Activated CD4-positive, alpha-beta T cell treated with anti-CD3 and anti-CD28 coated beads for 36 hours (primary cell): ENCODE measurements at regions of chr1 and their contacts with region 1.

Region 1: DNA sequence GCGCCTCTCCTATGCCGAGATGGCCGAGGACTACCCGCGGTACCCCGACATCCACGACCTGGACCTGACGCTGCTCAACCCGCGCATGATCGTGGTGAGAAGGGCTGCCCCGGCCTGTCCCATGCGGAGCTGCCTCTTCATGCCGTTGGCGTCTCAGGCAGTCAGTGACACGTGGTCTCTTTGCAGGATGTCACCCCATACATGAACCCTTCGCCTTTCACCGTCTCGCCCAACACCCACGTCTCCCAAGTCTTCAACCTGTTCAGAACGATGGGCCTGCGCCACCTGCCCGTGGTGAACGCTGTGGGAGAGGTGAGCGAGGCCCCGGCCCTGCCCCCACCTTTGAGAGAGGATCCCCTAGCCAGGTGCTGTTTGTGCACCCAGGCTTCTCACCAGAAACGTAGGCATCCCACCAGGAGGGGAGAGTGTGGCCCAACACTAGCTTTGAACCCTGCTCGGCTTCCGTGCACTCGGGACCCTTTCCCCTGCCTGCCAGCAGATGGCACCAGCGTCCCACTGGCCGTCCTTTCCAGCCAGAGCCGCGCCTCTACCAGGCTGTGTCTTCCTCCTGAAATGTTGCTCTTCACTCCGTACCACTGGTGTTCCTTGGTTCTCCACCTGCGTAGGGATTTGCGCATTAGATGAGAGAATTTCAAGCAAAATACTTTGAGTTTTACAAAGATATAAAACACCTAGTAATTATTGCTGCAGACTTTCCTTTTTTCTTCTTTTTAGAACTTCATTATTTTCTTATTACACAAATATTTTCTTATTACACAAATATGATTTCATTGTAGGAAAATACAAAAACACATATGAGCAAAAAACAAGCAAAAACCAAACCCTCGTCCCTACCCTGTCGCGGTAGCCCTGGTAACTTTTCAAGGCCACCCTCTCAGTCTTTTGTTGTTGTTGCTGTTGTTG is 9.0 kb downstream of the NPPA start:
- DNase-seq: peak; percentile 86
- ATAC-seq: peak; percentile 98
- H3K4me3 Mint-ChIP-seq: no peak overlapping the region
- H3K27ac Mint-ChIP-seq: no peak overlapping the region
- H3K4me1 Mint-ChIP-seq: no peaks in the 10 kb centered on the region
- H3K27me3 Mint-ChIP-seq: no peaks in the 10 kb centered on the region

Region 2: DNA sequence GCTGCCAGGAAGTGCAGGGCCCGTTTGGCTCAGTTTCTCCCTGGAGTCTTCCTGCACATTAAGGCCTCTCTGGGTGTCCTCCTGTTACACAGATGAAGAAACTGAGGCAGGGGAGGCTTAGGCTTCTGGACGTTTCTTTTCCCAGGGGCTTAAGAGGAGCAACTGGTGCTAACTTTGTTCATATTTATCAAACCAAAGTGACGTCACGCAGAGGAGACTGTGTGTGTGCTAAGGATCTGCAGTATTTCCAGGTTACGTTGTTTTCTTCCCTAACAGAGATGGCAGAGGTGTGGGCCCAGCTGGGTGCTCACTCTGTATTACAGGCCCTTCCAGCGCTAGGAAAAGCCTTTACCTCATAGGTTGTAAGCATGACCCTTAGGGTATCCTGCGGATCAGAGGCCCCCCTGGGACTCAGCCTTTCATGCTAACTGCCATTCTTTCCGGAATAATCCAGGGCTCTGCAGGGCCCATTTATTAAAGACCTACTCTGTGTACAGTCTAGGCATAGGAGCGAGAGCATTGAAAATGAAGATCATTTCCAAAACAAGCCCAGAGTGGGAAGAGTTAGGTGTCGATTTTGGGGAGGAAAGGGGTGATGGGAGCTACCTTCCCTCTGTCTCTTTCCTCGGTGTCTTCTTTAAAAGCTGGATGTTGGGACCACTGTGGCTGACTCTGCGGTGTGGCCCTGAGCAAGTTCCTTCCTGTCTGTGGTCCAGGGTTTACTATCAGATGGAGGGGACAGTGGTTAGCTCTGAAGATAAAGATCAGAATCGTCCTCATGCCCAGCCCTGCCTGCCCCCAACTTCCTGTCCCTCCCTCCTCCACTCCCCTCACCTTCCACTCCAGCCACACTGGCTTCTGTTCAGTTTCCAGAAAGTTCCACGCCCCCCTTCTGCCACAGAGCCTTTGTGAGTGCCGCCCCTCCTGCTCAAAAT is 98.1 kb before region 1 on chr1:
- CTCF ChIA-PET with region 1: no interaction called
- POLR2A ChIA-PET with region 1: no interaction called
- intact Hi-C with region 1: no loop called
- DNase-seq: peak; percentile 33
- ATAC-seq: peak; percentile 31
- H3K4me3 Mint-ChIP-seq: peak overlapping the region; percentile 24
- H3K27ac Mint-ChIP-seq: no peak overlapping the region
- H3K4me1 Mint-ChIP-seq: peaks cover 50% of the 10 kb centered on the region
- H3K27me3 Mint-ChIP-seq: no peaks in the 10 kb centered on the region

Region 3: GRCh38 chr1:11893907-11894251 is 55.3 kb after region 1 on chr1:
- CTCF ChIA-PET with region 1: interaction called, 4 read pairs
- POLR2A ChIA-PET with region 1: no interaction called
- intact Hi-C with region 1: loop called (anchors 1 kb)
- DNase-seq: peak; percentile 86
- ATAC-seq: peak; percentile 92
- H3K4me3 Mint-ChIP-seq: peak overlapping the region; percentile 16
- H3K27ac Mint-ChIP-seq: no peak overlapping the region
- H3K4me1 Mint-ChIP-seq: no peaks in the 10 kb centered on the region
- H3K27me3 Mint-ChIP-seq: peaks cover 23% of the 10 kb centered on the region

Region 4: GRCh38 chr1:11967028-11967547 is 128.5 kb after region 1 on chr1:
- CTCF ChIA-PET with region 1: no interaction called
- POLR2A ChIA-PET with region 1: no interaction called
- intact Hi-C with region 1: loop called in 1 of 2 experiments (anchors 5 kb)
- DNase-seq: peak; percentile 29
- ATAC-seq: peak; percentile 44
- H3K4me3 Mint-ChIP-seq: no peak overlapping the region
- H3K27ac Mint-ChIP-seq: no peak overlapping the region
- H3K4me1 Mint-ChIP-seq: no peaks in the 10 kb centered on the region
- H3K27me3 Mint-ChIP-seq: no peaks in the 10 kb centered on the region

Region 5: GRCh38 chr1:11990303-11991032 is 151.9 kb after region 1 on chr1:
- CTCF ChIA-PET with region 1: no interaction called
- POLR2A ChIA-PET with region 1: no interaction called
- intact Hi-C with region 1: no loop called
- DNase-seq: no peak
- ATAC-seq: no peak
- H3K4me3 Mint-ChIP-seq: no peak overlapping the region
- H3K27ac Mint-ChIP-seq: peak overlapping the region; percentile 26
- H3K4me1 Mint-ChIP-seq: peaks cover 8% of the 10 kb centered on the region
- H3K27me3 Mint-ChIP-seq: no peaks in the 10 kb centered on the region

Region 6: GRCh38 chr1:12031039-12031980 is 192.7 kb after region 1 on chr1:
- CTCF ChIA-PET with region 1: no interaction called
- POLR2A ChIA-PET with region 1: no interaction called
- intact Hi-C with region 1: loop called in 1 of 2 experiments (anchors 1 kb)
- DNase-seq: peak; percentile 73
- ATAC-seq: peak; percentile 88
- H3K4me3 Mint-ChIP-seq: no peak overlapping the region
- H3K27ac Mint-ChIP-seq: no peak overlapping the region
- H3K4me1 Mint-ChIP-seq: no peaks in the 10 kb centered on the region
- H3K27me3 Mint-ChIP-seq: no peaks in the 10 kb centered on the region

Region 7: GRCh38 chr1:12208764-12209494 is 370.3 kb after region 1 on chr1:
- CTCF ChIA-PET with region 1: no interaction called
- POLR2A ChIA-PET with region 1: no interaction called
- intact Hi-C with region 1: loop called in 1 of 2 experiments (anchors 10 kb)
- DNase-seq: peak; percentile 93
- ATAC-seq: peak; percentile 68
- H3K4me3 Mint-ChIP-seq: no peak overlapping the region
- H3K27ac Mint-ChIP-seq: peak overlapping the region; percentile 17
- H3K4me1 Mint-ChIP-seq: peaks cover 47% of the 10 kb centered on the region
- H3K27me3 Mint-ChIP-seq: no peaks in the 10 kb centered on the region